PC-9 (cell line): ENCODE measurements at regions of chr14 and their contacts with region 1.

Region 1: GRCh38 chr14:21231020-21231652 is 38.1 kb downstream of the HNRNPC start:
- DNase-seq: no peak
- H3K4me3 ChIP-seq: no peak overlapping the region
- H3K27ac ChIP-seq: 0 out of 2 replicates have a peak overlapping the region, but pooled peaks have one; percentile 18
- H3K4me1 ChIP-seq: no peaks in the 10 kb centered on the region
- H3K27me3 ChIP-seq: no peaks in the 10 kb centered on the region
- CTCF ChIP-seq: no peak

Region 2: GRCh38 chr14:20742077-20742476 is 489.1 kb before region 1 on chr14:
- CTCF ChIA-PET with region 1: no interaction called
- POLR2A ChIA-PET with region 1: interaction called, 10 read pairs
- intact Hi-C with region 1: no loop called
- DNase-seq: peak in 1 of 2 experiments; percentile 9
- H3K4me3 ChIP-seq: no peak overlapping the region
- H3K27ac ChIP-seq: no peak overlapping the region
- H3K4me1 ChIP-seq: peaks cover 7% of the 10 kb centered on the region; the same call in 1 of the 2 replicates
- H3K27me3 ChIP-seq: no peaks in the 10 kb centered on the region
- CTCF ChIP-seq: no peak

Region 3: DNA sequence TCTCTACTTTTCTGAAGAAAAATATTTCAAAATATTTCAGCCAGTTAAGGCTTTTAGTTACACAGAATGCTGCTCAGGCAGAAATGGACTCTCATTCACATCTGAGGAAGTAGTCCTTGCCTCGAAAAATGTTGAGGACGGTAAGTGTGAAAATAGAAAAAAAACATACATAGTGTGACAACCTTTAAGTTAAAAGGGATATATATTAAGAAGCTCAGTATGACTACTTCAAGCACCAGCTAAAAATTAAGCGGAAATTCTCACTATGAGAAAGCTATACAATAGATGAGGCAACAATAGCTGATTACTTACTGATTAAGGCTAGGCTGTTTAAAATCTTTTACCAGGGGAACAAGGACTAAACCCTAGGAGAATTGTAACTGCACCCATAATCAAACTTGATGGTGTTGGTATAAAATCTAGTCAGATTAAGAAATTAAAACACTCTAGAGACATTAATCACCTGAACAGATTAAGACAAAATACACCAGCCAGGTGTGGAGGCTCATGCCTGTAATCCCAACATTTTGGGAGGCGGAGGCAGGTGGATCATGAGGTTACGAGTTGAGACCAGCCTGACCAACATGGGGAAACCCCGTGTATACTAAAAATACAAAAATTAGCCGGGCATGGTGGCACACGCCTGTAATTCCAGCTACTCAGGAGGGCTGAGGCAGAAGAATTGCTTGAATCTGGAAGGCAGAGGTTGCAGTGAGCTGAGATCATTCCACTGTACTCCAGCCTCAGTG is 15.8 kb before region 1 on chr14:
- CTCF ChIA-PET with region 1: no interaction called
- POLR2A ChIA-PET with region 1: no interaction called
- intact Hi-C with region 1: no loop called
- DNase-seq: no peak
- H3K4me3 ChIP-seq: no peak overlapping the region
- H3K27ac ChIP-seq: peak overlapping the region; percentile 15
- H3K4me1 ChIP-seq: no peaks in the 10 kb centered on the region
- H3K27me3 ChIP-seq: no peaks in the 10 kb centered on the region
- CTCF ChIP-seq: no peak